Psoas muscle (tissue), 8 donors: ENCODE measurements at regions of chr16 and their contacts with region 1.

Region 1: GRCh38 chr16:87765776-87766484 is at the start of gene KLHDC4:
- DNase-seq: peak; percentile 90 to 94
- ATAC-seq: peak; percentile 92 to 97 (median 96)
- H3K4me3 ChIP-seq: peak within 1 kb of the TSS; percentile 99
- H3K27ac ChIP-seq: peak within 1 kb of the TSS; percentile 96
- H3K4me1 ChIP-seq: peaks cover 9% of the 10 kb centered on the region
- H3K27me3 ChIP-seq: no peaks in the 10 kb centered on the region
- CTCF ChIP-seq: no peak
- total RNA-seq, gene KLHDC4: 11.1 to 19.7 (median 15.8) TPM

Region 2: DNA sequence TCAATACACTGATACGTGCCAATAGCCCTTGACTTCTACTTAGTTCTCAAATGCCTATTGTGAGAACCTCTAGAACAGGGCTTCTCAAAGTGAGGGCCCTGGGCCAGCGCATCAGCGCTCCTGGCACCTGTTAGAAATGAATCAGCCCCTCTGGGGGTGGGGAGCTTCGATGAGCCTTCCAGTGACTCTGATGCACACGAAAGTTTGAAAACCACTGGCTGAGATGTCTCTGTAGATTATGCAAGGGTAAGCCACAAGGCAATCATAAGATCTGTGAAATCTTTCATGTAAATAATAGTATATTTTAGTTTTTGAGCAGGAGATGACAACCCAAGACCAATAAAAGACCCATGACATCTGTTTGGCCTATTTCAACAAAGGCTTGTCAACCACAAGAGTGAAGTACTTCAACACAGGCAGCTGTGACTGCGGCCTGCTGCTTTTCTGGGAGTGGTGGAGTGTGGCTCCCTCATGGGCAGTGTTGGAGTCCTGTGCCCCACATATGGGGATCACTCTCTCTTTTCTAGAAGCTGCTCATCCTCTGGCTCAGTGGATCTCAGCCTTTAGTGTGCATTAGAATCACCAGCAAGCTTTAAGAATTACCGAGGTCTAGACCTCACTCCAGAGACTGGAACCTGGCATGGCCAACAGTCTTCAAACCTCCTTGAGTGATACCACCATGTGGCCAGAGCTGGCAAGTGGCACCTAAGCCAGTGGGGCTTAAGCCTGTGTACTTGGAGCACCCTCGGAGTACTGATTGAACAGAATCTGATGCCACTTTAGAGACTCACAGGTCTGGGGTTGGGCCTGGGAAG is 1216.6 kb before region 1 on chr16:
- intact Hi-C with region 1: loop called in 1 of 2 experiments (anchors 5 kb)
- DNase-seq: no peak
- ATAC-seq: peak in 3 of 4 donors; percentile 40 to 73 (median 55)
- H3K4me3 ChIP-seq: no peak overlapping the region
- H3K27ac ChIP-seq: no peak overlapping the region
- H3K4me1 ChIP-seq: no peaks in the 10 kb centered on the region
- H3K27me3 ChIP-seq: no peaks in the 10 kb centered on the region
- CTCF ChIP-seq: no peak

Region 3: GRCh38 chr16:87550496-87550961 is 215.4 kb before region 1 on chr16:
- intact Hi-C with region 1: loop called in 1 of 2 experiments (anchors 5 kb)
- DNase-seq: peak; percentile 49 to 70
- ATAC-seq: peak; percentile 47 to 66 (median 53)
- H3K4me3 ChIP-seq: no peak overlapping the region
- H3K27ac ChIP-seq: no peak overlapping the region
- H3K4me1 ChIP-seq: no peaks in the 10 kb centered on the region
- H3K27me3 ChIP-seq: peaks cover 0 to 34% (median 9%) of the 10 kb centered on the region in 3 donors
- CTCF ChIP-seq: peak; percentile 84

Region 4: DNA sequence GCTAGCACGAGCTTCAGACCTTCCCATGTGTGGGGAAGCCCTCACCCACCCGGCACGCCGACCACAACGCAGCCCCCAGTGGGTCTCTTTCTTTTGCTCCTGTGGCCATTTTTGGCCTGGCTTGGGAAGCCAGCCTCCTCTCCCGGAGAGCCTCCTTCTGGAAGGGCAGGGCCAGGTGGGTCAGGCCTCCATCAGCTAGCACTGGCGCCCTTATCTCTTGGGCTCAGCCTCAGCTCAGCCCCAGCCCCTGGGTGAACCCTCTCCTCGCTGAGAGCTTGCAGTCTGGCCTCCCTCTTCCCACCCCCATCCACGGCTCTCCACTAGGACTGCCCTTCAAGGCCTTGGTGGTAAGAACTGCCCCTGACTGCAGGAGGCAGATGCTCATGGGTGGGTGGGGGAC is 178.3 kb before region 1 on chr16:
- intact Hi-C with region 1: loop called (anchors 2 to 5 kb)
- DNase-seq: no peak
- ATAC-seq: no peak
- H3K4me3 ChIP-seq: no peak overlapping the region
- H3K27ac ChIP-seq: no peak overlapping the region
- H3K4me1 ChIP-seq: peaks cover 5% of the 10 kb centered on the region
- H3K27me3 ChIP-seq: peaks cover 0 to 40% (median 2%) of the 10 kb centered on the region in 3 donors
- CTCF ChIP-seq: no peak

Region 5: DNA sequence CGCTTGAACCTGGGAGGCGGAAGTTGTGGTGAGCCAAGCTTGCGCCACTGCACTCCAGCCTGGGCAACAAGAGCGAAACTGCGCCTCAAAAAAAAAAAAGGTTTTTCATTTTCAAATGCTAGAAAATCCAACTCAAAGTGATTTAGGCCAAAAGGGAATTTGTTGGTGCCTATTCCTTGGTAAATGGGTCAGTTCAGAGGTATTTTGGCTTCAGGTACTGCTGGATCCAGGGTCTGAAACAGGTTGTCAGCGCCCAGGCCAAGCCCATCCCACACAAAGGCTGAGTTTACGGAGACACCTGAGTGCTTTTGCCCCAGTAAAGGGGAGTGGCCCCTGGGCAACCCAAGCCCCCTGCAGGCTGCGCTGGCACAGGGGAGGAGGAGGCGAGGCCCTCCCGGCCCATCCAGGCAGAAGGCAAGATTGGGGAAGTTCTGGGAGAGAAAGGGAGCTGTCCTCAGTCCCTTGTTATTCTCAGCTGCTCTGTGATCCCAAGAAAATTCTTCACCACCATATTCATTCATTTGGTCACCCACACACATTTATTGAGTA is 172.1 kb before region 1 on chr16:
- intact Hi-C with region 1: loop called (anchors 2 to 5 kb)
- DNase-seq: no peak
- ATAC-seq: no peak
- H3K4me3 ChIP-seq: no peak overlapping the region
- H3K27ac ChIP-seq: no peak overlapping the region
- H3K4me1 ChIP-seq: peaks cover 5% of the 10 kb centered on the region
- H3K27me3 ChIP-seq: peaks cover 0 to 39% (median 3%) of the 10 kb centered on the region in 3 donors
- CTCF ChIP-seq: no peak

Region 6: DNA sequence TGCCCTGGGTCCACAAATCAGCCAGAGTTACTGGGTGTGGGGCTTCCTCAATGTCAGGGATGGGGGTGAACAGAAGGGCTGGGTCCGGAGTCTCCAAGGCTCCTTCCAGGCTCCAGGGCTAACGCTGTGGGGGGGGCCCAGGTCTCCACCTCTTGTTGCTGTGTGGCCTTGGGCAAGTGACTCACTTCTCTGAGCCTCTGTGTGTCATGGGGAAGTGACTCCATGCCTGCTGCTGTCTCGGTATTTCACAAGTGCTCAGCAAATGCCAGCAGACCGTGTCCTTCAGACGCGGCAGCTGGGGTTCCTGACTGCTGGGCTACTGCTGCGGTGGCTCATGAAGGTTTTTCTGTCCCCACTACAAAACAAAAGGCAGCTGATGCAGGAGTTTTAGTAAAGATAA is 137.0 kb before region 1 on chr16:
- intact Hi-C with region 1: no loop called
- DNase-seq: peak in 1 of 2 donors; percentile 30
- ATAC-seq: no peak
- H3K4me3 ChIP-seq: no peak overlapping the region
- H3K27ac ChIP-seq: no peak overlapping the region
- H3K4me1 ChIP-seq: no peaks in the 10 kb centered on the region
- H3K27me3 ChIP-seq: peaks cover 0 to 63% (median 13%) of the 10 kb centered on the region in 3 donors
- CTCF ChIP-seq: no peak

Region 7: GRCh38 chr16:87793776-87794514 is 28.0 kb after region 1 on chr16:
- intact Hi-C with region 1: no loop called
- DNase-seq: no peak
- ATAC-seq: no peak
- H3K4me3 ChIP-seq: no peak overlapping the region
- H3K27ac ChIP-seq: no peak overlapping the region
- H3K4me1 ChIP-seq: peaks cover 8% of the 10 kb centered on the region
- H3K27me3 ChIP-seq: no peaks in the 10 kb centered on the region
- CTCF ChIP-seq: no peak

Region 8: GRCh38 chr16:87918866-87919680 is 153.1 kb after region 1 on chr16:
- intact Hi-C with region 1: no loop called
- DNase-seq: peak; percentile 72 to 78
- ATAC-seq: peak in 2 of 4 donors; percentile 15 to 42
- H3K4me3 ChIP-seq: peak overlapping the region; percentile 28
- H3K27ac ChIP-seq: peak overlapping the region; percentile 67
- H3K4me1 ChIP-seq: peaks cover 4% of the 10 kb centered on the region
- H3K27me3 ChIP-seq: no peaks in the 10 kb centered on the region
- CTCF ChIP-seq: no peak

Region 9: GRCh38 chr16:88194397-88195268 is 428.7 kb after region 1 on chr16:
- intact Hi-C with region 1: no loop called
- DNase-seq: peak; percentile 41 to 80
- ATAC-seq: peak; percentile 80 to 92 (median 88)
- H3K4me3 ChIP-seq: peak overlapping the region; percentile 41
- H3K27ac ChIP-seq: peak overlapping the region; percentile 88
- H3K4me1 ChIP-seq: no peaks in the 10 kb centered on the region
- H3K27me3 ChIP-seq: no peaks in the 10 kb centered on the region
- CTCF ChIP-seq: no peak